Transverse colon (tissue), 4 donors: ENCODE measurements at regions of chr19 and their contacts with region 1.

Region 1: GRCh38 chr19:3513198-3514140 is 7.4 kb downstream of the FZR1 start:
- DNase-seq: no peak
- H3K4me3 ChIP-seq: no peak overlapping the region
- H3K27ac ChIP-seq: no peak overlapping the region
- H3K4me1 ChIP-seq: peaks cover 0 to 20% (median 9%) of the 10 kb centered on the region in 4 donors
- H3K27me3 ChIP-seq: no peaks in the 10 kb centered on the region
- CTCF ChIP-seq: no peak
- EP300 ChIP-seq: no peak
- POLR2A ChIP-seq: no peak

Region 2: GRCh38 chr19:3526507-3527244 is 13.2 kb after region 1 on chr19:
- in situ Hi-C with region 1: no loop called
- intact Hi-C with region 1: loop called (anchors 2 kb)
- DNase-seq: no peak
- H3K4me3 ChIP-seq: no peak overlapping the region
- H3K27ac ChIP-seq: no peak overlapping the region
- H3K4me1 ChIP-seq: no peaks in the 10 kb centered on the region
- H3K27me3 ChIP-seq: no peaks in the 10 kb centered on the region
- CTCF ChIP-seq: no peak
- EP300 ChIP-seq: no peak
- POLR2A ChIP-seq: no peak